ENCODE measurements at regions of chr3 and their contacts with region 1.

Region 1: GRCh38 chr3:172256101-172256734 is 192.0 kb downstream of the GHSR start:
- DNase-seq: peak; percentile 87
- H3K4me3 ChIP-seq: no peak overlapping the region
- H3K27ac ChIP-seq: peak overlapping the region; percentile 61 to 87 (median 83)
- H3K4me1 ChIP-seq: peaks cover 0 to 60% (median 46%) of the 10 kb centered on the region in 4 donors
- H3K27me3 ChIP-seq: no peaks in the 10 kb centered on the region
- CTCF ChIP-seq: no peak
- EP300 ChIP-seq: peak in 1 of 4 donors; percentile 55
- POLR2A ChIP-seq: no peak

Region 2: DNA sequence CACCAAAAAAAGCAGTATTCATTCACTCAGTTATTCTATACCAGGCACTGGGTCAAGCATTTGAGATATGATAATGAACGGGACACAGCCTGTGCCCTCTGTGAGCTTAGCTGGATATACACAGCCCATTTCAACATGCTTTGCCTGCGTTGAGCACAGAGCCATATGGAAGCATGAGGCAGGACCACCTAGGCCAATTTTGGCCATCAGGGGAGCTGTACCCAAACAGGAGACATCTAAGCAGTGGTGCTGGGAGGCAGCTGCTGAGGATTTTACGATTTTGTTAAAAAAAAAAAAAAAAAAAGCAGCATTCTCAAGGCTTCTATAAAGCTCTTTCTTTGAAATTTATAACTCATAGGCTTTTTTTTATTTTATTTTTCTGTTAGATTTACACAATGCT is 1142.5 kb before region 1 on chr3:
- intact Hi-C with region 1: no loop called
- DNase-seq: no peak
- H3K4me3 ChIP-seq: no peak overlapping the region
- H3K27ac ChIP-seq: no peak overlapping the region
- H3K4me1 ChIP-seq: no peaks in the 10 kb centered on the region
- H3K27me3 ChIP-seq: no peaks in the 10 kb centered on the region
- CTCF ChIP-seq: no peak
- EP300 ChIP-seq: no peak
- POLR2A ChIP-seq: no peak

Region 3: GRCh38 chr3:172201136-172201869 is 54.9 kb before region 1 on chr3:
- intact Hi-C with region 1: loop called (anchors 5 kb)
- DNase-seq: peak; percentile 89
- H3K4me3 ChIP-seq: no peak overlapping the region
- H3K27ac ChIP-seq: peak overlapping the region; percentile 71 to 88 (median 77)
- H3K4me1 ChIP-seq: peaks cover 0 to 61% (median 46%) of the 10 kb centered on the region in 4 donors
- H3K27me3 ChIP-seq: no peaks in the 10 kb centered on the region
- CTCF ChIP-seq: no peak
- EP300 ChIP-seq: peak in 1 of 4 donors; percentile 34
- POLR2A ChIP-seq: no peak

Region 4: DNA sequence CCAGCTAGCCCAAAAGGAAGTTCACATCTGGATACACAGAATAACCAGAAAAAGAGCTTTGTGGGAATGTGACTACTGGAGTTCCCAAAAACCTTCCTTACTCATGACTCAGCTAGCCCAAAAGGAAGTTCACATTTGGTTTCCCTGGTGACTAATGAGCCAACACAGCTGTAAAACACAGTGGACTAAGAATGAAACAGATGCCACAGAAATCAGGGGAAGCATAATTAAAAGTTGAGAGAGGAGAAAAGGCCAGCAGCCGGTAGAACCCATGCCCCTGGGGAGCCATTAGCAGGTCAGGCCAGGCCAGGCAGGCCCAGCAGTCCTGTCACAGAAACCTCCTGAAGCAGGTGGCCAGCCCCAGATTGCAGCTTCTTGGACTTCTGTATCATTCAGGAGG is 61.8 kb after region 1 on chr3:
- intact Hi-C with region 1: loop called (anchors 5 kb)
- DNase-seq: peak; percentile 73
- H3K4me3 ChIP-seq: no peak overlapping the region
- H3K27ac ChIP-seq: peak overlapping the region; percentile 64 to 89 (median 74)
- H3K4me1 ChIP-seq: peaks cover 0 to 90% (median 78%) of the 10 kb centered on the region in 4 donors
- H3K27me3 ChIP-seq: no peaks in the 10 kb centered on the region
- CTCF ChIP-seq: no peak
- EP300 ChIP-seq: peak in 1 of 4 donors; percentile 52
- POLR2A ChIP-seq: no peak

Region 5: GRCh38 chr3:172367205-172368105 is 111.2 kb after region 1 on chr3:
- intact Hi-C with region 1: no loop called
- DNase-seq: no peak
- H3K4me3 ChIP-seq: no peak overlapping the region
- H3K27ac ChIP-seq: no peak overlapping the region
- H3K4me1 ChIP-seq: peaks cover 0 to 15% (median 3%) of the 10 kb centered on the region in 4 donors
- H3K27me3 ChIP-seq: no peaks in the 10 kb centered on the region
- CTCF ChIP-seq: no peak
- EP300 ChIP-seq: no peak
- POLR2A ChIP-seq: no peak